ENCODE measurements at regions of chr10 and their contacts with region 1.

Region 1: GRCh38 chr10:101050208-101051069 is 11.3 kb upstream of the KAZALD1 start:
- DNase-seq: peak; percentile 95
- ATAC-seq: peak; percentile 68
- H3K4me3 Mint-ChIP-seq: peak overlapping the region; percentile 60
- H3K27ac Mint-ChIP-seq: no peak overlapping the region
- H3K4me1 Mint-ChIP-seq: peaks cover 41% of the 10 kb centered on the region
- H3K27me3 Mint-ChIP-seq: peaks cover 67% of the 10 kb centered on the region
- CTCF ChIP-seq: peak; percentile 86

Region 2: DNA sequence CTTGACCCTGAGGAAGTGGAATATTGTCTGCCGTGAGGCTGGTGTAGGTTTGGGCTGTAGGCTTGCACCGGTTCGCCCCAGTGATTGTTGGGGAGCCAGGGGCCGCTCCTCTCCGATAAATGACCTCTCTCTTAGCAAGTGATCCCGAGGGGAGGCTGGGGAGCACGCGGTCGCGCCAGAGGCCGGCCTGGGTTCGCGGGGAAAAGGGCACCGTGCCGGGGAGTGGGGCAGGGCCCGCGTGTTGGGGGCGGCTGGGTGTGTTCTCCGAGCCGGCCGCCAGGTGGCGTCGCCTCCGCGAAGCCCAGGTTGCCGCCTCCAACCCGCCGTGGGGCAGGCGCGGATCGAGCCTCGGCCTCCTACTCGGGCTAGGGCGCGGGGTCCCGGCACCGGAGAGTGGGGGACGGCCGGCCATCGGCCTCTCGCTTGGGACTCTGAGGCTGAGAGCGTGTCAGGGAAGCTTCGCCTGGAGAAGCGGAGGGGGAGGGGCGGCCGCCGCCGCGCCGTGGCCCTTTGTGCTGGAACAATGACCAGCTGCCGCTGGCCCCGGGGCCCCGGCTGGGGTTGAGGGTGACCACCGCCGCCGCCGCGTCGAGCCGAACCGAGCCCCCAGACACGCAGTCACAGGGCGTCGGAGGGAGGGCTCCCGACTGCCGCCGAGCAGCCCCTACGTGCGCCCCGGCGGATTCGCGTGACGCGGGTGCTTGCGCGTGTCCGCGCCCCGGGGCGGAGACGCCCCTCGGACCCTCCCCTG is 51.3 kb before region 1 on chr10:
- CTCF ChIA-PET with region 1: interaction called, 13 read pairs
- POLR2A ChIA-PET with region 1: no interaction called
- DNase-seq: peak; percentile 73
- ATAC-seq: peak; percentile 4
- H3K4me3 Mint-ChIP-seq: peak overlapping the region; percentile 83
- H3K27ac Mint-ChIP-seq: peak overlapping the region; percentile 95
- H3K4me1 Mint-ChIP-seq: peaks cover 32% of the 10 kb centered on the region
- H3K27me3 Mint-ChIP-seq: no peaks in the 10 kb centered on the region
- CTCF ChIP-seq: peak; percentile 97

Region 3: GRCh38 chr10:101018600-101019439 is 31.6 kb before region 1 on chr10:
- CTCF ChIA-PET with region 1: interaction called, 83 read pairs
- POLR2A ChIA-PET with region 1: no interaction called
- DNase-seq: peak; percentile 95
- ATAC-seq: peak; percentile 77
- H3K4me3 Mint-ChIP-seq: peak overlapping the region; percentile 73
- H3K27ac Mint-ChIP-seq: no peak overlapping the region
- H3K4me1 Mint-ChIP-seq: peaks cover 15% of the 10 kb centered on the region
- H3K27me3 Mint-ChIP-seq: peaks cover 64% of the 10 kb centered on the region
- CTCF ChIP-seq: peak; percentile 70

Region 4: DNA sequence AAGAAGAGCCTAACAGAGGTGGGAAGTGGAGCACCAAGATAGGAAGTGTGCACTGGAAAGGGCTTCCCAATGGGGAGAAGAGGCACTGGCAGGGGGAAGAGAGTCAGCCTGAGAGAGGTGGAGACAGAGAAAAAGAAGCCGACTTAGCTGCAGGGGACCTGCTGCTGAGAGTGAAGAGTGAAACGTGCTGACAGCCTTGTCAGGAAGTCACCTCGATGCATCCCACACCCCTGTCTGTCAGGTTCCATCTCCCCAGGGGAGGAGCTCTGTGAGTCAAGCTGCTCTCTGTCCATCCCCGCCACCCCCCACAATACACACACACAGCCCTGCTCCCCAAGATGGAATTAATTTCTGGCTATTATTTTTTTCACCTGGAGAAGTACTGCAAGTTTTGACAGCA is 25.3 kb after region 1 on chr10:
- CTCF ChIA-PET with region 1: interaction called, 405 read pairs
- POLR2A ChIA-PET with region 1: interaction called, 5 read pairs
- DNase-seq: no peak
- ATAC-seq: no peak
- H3K4me3 Mint-ChIP-seq: no peak overlapping the region
- H3K27ac Mint-ChIP-seq: no peak overlapping the region
- H3K4me1 Mint-ChIP-seq: peaks cover 41% of the 10 kb centered on the region
- H3K27me3 Mint-ChIP-seq: peaks cover 79% of the 10 kb centered on the region
- CTCF ChIP-seq: no peak

Region 5: DNA sequence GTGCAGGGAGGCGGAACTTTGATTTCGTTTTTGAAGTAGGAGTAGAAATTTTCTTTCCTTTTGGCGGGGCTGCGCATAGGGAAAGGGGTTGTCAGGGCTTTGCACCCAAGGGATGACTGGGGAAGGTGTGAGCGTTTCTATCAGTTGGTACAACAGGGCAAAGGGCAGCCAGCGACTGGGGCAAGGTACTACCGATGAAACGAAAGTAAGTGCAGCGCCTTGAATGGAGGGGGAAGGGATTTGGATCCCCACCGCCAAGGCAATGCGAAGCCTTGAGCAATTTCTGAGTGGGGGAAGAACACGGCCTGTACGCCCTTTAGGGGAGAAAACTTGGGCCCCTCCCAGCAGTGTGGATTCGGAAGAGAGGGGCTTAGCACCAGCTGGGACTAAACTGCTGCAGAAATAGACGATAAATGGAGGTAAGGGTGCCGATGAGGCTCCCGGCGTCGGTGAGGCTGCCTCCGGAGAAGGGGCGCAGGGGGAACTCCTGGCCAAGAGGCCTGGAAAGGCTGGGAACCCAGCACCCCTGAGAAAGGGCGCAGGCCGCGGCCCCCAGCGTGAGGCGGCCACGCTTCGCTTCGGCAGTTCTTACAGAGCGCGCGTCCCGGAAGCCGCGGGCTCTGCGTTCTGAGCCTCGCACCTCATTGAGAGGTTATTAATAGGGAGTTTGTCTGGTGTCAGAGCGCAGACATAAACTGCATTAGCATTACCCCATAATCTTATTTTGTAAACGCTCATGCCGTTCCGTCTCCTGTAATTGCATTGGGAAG is 70.6 kb after region 1 on chr10:
- CTCF ChIA-PET with region 1: interaction called, 18 read pairs
- POLR2A ChIA-PET with region 1: no interaction called
- DNase-seq: no peak
- ATAC-seq: no peak
- H3K4me3 Mint-ChIP-seq: peak overlapping the region; percentile 72
- H3K27ac Mint-ChIP-seq: no peak overlapping the region
- H3K4me1 Mint-ChIP-seq: peaks cover 20% of the 10 kb centered on the region
- H3K27me3 Mint-ChIP-seq: peaks cover 98% of the 10 kb centered on the region
- CTCF ChIP-seq: no peak

Region 6: DNA sequence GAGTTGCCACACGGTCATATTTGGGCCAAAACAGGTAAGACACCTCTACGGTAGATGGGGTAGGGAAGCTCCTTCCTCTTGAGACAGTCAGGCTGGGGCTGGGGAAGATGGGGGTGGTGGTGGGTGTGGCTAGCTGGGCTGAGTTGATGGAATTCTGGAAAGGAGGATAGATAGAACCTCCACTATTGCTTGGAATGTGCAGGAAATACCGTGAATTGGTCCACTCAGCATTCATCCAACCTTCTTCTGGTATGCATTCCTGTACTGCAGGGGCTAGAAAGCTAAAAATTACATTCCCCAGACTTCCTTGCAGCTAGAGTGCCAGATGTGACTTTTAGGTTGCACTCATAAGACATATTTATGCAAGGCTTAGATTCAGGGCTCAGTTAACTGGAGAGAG is 105.5 kb after region 1 on chr10:
- CTCF ChIA-PET with region 1: interaction called, 11 read pairs
- POLR2A ChIA-PET with region 1: no interaction called
- DNase-seq: no peak
- ATAC-seq: no peak
- H3K4me3 Mint-ChIP-seq: no peak overlapping the region
- H3K27ac Mint-ChIP-seq: no peak overlapping the region
- H3K4me1 Mint-ChIP-seq: peaks cover 12% of the 10 kb centered on the region
- H3K27me3 Mint-ChIP-seq: peaks cover 71% of the 10 kb centered on the region
- CTCF ChIP-seq: no peak

Region 7: GRCh38 chr10:101291331-101292193 is 241.1 kb after region 1 on chr10:
- CTCF ChIA-PET with region 1: interaction called, 11 read pairs
- POLR2A ChIA-PET with region 1: no interaction called
- DNase-seq: peak; percentile 87
- ATAC-seq: peak; percentile 65
- H3K4me3 Mint-ChIP-seq: peak overlapping the region; percentile 80
- H3K27ac Mint-ChIP-seq: no peak overlapping the region
- H3K4me1 Mint-ChIP-seq: peaks cover 39% of the 10 kb centered on the region
- H3K27me3 Mint-ChIP-seq: peaks cover 97% of the 10 kb centered on the region
- CTCF ChIP-seq: peak; percentile 80